ENCODE measurements at regions of chr1 and their contacts with region 1.

Region 1: GRCh38 chr1:48498096-48498791 is 26.2 kb upstream of the SPATA6 start:
- DNase-seq: peak; percentile 69 to 86
- ATAC-seq: peak; percentile 83

Region 2: DNA sequence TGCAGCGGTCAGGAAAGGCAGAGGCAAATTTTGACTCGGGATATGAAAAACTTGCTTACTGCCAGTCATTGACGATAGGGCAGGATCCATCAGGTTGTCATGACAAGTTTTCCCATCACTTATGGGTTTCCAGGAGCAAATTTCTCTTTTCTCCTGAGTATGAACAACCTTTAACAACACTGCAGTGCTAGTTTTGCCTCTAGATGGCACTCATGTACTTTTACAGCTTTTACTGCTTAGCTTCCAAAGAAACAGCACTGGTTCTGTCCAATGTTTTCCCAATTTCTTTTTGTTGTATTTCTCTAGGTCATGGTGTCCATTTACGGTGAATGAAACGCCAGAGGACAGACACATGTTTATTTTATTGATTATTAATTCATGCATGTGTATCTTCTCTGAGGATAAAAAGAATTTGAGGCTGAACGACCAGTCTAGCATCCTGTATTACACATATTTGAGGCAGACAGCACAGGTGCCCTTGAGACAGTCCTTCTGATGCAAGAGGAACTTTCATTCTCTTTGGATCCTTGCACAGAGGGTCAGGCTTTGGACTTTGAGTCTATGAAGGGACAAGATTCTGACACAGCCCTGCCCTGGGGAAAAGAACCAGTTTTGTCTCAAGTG is 388.7 kb before region 1 on chr1:
- intact Hi-C with region 1: loop called in 1 of 2 experiments (anchors 10 kb)
- DNase-seq: no peak
- ATAC-seq: peak; percentile 73

Region 3: DNA sequence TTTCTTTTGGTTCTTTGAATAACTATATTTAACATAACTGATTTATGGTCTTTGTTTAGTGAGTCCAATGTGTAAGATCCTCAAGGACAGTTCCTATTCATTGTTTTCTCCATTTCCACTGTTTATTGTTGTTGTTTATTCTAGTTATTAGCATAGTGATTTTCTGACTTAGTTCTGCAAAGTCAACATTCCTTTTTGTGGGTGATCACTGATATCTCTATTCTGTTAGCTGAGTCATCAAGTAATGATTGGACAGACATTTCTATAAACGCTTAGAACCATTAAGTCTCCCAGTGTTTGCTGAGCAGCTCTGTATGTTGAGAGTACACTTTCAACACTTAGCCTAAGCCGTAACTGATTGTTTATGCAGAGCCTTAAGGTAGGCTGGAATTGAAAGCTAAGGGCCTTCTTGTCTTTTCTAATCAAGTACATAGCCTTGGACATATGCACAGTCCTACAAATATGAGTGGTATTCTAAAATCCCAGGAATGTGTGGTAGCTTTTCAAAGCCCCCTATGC is 188.6 kb before region 1 on chr1:
- intact Hi-C with region 1: no loop called
- DNase-seq: no peak
- ATAC-seq: no peak

Region 4: GRCh38 chr1:48596046-48596445 is 97.8 kb after region 1 on chr1:
- intact Hi-C with region 1: no loop called
- DNase-seq: no peak
- ATAC-seq: no peak